HEK293 (cell line): ENCODE measurements at regions of chr9 and their contacts with region 1.

Region 1: DNA sequence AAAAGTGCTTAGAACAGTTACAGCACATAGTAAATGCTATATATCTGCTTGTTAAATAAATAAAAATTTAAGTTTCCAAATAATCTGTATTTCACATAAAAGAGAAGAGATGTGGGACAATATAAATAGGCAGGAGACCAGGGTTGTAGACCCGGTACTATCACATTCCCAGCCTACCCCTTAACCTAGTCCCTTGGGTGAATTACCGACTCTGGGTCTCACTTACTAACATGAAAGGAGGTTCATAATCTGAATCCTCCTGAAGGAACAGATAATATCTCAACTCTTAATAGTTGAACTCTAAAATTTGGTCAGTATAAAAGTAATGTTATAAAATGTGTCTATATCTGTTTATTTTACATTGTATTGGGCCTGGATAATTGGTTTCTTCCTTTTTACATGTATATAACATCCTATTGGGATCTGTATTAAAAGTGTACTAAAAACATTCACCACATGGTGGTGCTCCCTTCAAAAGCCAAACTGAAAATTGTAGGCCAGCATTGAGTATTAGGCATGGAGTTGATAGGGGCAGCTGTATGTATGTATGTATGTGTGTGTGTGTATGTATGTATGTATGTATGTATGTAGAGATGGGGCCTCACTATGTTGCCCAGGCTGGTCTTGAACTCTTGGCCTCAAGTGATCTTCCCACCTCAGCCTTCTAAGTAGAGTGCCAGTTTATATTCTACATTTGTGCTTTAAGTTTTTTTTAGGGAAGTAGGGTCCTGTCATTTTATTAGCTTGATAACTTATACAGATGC is 64.2 kb upstream of the ABL1 start:
- H3K4me3 ChIP-seq: no peak overlapping the region
- H3K27ac ChIP-seq: no peak overlapping the region
- H3K4me1 ChIP-seq: no peaks in the 10 kb centered on the region
- CTCF ChIP-seq: peak; percentile 39; the same call in 1 of the 2 replicates

Region 2: GRCh38 chr9:129884220-129885017 is 886.4 kb before region 1 on chr9:
- CTCF ChIA-PET with region 1: no interaction called
- POLR2A ChIA-PET with region 1: no interaction called
- H3K4me3 ChIP-seq: no peak overlapping the region
- H3K27ac ChIP-seq: no peak overlapping the region
- H3K4me1 ChIP-seq: no peaks in the 10 kb centered on the region; the same call in 1 of the 2 replicates
- CTCF ChIP-seq: peak; percentile 39; the same call in 1 of the 2 replicates

Region 3: DNA sequence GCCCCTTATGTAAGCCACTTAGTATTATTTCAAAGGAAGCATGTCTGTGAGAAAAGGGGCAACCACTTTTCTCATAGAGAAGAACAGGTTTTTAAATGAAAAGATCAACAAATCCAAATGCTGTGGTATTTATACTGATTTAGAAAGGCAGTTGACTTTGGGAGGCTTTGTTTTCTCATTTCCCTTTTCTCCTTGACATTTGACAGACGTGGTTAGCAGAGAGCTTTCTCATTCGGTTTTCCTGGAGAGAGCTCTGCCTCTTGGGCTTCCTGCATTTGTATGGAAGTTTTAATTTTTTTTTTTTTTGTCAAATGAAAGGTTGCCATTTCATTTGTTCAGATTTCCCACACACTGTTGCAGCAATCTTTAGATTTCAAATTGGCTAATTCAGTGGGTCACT is 14.8 kb before region 1 on chr9:
- CTCF ChIA-PET with region 1: interaction called, 29 read pairs
- POLR2A ChIA-PET with region 1: interaction called, 3 read pairs
- H3K4me3 ChIP-seq: no peak overlapping the region
- H3K27ac ChIP-seq: no peak overlapping the region
- H3K4me1 ChIP-seq: no peaks in the 10 kb centered on the region
- CTCF ChIP-seq: no peak

Region 4: DNA sequence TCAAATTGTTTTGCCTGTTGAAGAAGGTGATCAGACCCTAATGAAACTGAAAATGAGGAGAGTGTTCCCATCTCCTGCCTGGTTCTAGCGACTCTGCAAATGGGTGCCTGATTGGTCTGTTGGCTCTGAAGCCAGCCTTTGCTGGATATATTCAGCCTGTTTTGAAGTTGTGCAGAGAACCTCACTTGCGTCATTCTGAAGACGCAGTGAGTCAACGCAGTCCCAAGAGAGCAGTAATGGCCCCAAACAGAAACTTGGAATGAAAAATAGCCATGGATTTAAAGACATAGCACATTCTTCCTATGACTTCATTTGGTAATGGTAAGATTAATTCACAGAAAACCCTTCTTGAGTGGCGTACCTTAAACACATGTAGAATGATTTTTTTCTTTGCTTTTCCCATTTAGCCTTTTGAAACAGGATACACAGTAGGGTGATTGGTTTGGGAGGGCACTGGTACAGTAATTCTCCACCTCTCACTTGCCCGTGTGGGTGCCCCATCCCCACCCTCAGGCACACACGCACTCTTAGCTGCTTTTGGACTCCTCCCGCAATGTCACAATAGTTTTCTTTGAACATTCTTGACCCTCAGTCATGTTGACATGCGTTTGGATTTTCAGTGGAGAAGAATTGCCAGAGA is 10.1 kb after region 1 on chr9:
- CTCF ChIA-PET with region 1: interaction called, 22 read pairs
- POLR2A ChIA-PET with region 1: no interaction called
- H3K4me3 ChIP-seq: no peak overlapping the region
- H3K27ac ChIP-seq: peak overlapping the region; percentile 44
- H3K4me1 ChIP-seq: no peaks in the 10 kb centered on the region; the same call in 1 of the 2 replicates
- CTCF ChIP-seq: no peak

Region 5: GRCh38 chr9:130857864-130858738 is 87.2 kb after region 1 on chr9:
- CTCF ChIA-PET with region 1: interaction called, 365 read pairs
- POLR2A ChIA-PET with region 1: interaction called, 3 read pairs
- H3K4me3 ChIP-seq: no peak overlapping the region
- H3K27ac ChIP-seq: no peak overlapping the region
- H3K4me1 ChIP-seq: no peaks in the 10 kb centered on the region
- CTCF ChIP-seq: no peak